Caco-2 (cell line): ENCODE measurements at regions of chr4 and their contacts with region 1.

Region 1: DNA sequence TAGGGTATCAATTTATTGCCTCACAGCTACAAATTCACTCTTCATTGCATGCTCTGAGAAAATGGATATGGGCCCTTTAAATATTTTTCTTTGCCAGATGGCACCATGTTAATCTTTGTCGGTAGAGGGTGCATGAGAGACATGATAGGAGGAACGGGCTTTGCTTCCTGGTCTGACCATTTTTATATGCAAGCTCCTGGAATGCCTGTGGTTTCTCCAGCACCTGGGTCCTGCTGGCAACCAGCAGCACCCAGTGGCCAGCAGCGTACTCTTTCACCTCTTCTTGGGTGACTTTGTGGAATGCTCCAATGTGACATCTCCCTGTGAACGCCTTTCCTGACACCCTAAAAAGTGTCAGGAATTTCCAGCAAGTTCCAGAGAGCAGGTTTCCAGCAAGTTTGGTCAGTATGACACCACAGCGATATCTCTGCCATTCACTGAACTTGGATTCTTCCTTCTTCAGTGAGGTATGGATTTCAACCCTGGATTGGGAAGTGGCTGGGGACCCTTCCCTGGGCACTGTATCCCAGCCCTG is 140.3 kb upstream of the PGRMC2 start:
- DNase-seq: peak; percentile 72 to 82
- H3K4me3 ChIP-seq: no peak overlapping the region
- H3K4me3 Mint-ChIP-seq: no peak overlapping the region
- H3K27ac Mint-ChIP-seq: peak overlapping the region; percentile 67
- H3K4me1 ChIP-seq: peaks cover 20% of the 10 kb centered on the region
- H3K4me1 Mint-ChIP-seq: peaks cover 8% of the 10 kb centered on the region
- H3K27me3 ChIP-seq: no peaks in the 10 kb centered on the region
- H3K27me3 Mint-ChIP-seq: no peaks in the 10 kb centered on the region
- CTCF ChIP-seq: peak; percentile 25 to 39

Region 2: GRCh38 chr4:128220286-128221235 is 207.3 kb before region 1 on chr4:
- CTCF ChIA-PET with region 1: no interaction called
- POLR2A ChIA-PET with region 1: no interaction called
- intact Hi-C with region 1: loop called (anchors 10 kb)
- DNase-seq: no peak
- H3K4me3 ChIP-seq: no peak overlapping the region
- H3K4me3 Mint-ChIP-seq: no peak overlapping the region
- H3K27ac Mint-ChIP-seq: no peak overlapping the region
- H3K4me1 ChIP-seq: no peaks in the 10 kb centered on the region
- H3K4me1 Mint-ChIP-seq: no peaks in the 10 kb centered on the region
- H3K27me3 ChIP-seq: no peaks in the 10 kb centered on the region
- H3K27me3 Mint-ChIP-seq: no peaks in the 10 kb centered on the region
- CTCF ChIP-seq: no peak

Region 3: GRCh38 chr4:128385683-128386304 is 42.1 kb before region 1 on chr4:
- CTCF ChIA-PET with region 1: no interaction called
- POLR2A ChIA-PET with region 1: no interaction called
- intact Hi-C with region 1: loop called (anchors 2 kb)
- DNase-seq: no peak
- H3K4me3 ChIP-seq: no peak overlapping the region
- H3K4me3 Mint-ChIP-seq: no peak overlapping the region
- H3K27ac Mint-ChIP-seq: no peak overlapping the region
- H3K4me1 ChIP-seq: peaks cover 32% of the 10 kb centered on the region
- H3K4me1 Mint-ChIP-seq: peaks cover 8% of the 10 kb centered on the region
- H3K27me3 ChIP-seq: no peaks in the 10 kb centered on the region
- H3K27me3 Mint-ChIP-seq: no peaks in the 10 kb centered on the region
- CTCF ChIP-seq: no peak

Region 4: DNA sequence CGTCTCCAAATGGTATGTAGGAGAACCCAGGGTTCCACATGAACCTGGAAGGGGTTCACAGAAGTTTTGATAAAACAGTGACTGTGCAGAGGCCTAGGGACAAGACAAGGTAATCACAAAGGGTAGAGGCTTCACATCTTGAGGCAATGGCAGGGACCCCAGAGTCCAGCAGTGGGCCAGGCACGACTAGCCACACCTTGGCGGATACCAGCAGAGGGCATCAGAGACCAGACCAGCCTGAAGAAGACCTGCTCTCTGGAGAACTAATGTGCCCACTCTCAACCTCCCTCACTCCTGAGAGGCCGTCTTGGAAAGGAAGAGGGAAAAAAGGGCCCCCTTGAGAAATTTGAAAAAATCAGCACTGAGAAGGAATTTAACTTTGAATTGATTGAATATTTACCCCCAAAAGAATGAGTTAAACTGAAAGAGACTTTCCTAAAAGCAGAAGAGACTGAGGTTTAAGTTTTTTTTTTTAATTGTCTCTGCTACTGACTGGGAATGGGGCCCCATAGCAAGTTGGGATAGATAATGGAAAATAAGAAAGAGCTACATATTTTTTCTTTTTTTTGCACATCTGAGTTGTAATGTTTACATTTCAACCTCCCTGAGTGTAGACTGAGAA is 137.8 kb after region 1 on chr4:
- CTCF ChIA-PET with region 1: no interaction called
- POLR2A ChIA-PET with region 1: no interaction called
- intact Hi-C with region 1: loop called (anchors 1 kb)
- DNase-seq: peak; percentile 62 to 70
- H3K4me3 ChIP-seq: no peak overlapping the region
- H3K4me3 Mint-ChIP-seq: no peak overlapping the region
- H3K27ac Mint-ChIP-seq: no peak overlapping the region
- H3K4me1 ChIP-seq: peaks cover 28% of the 10 kb centered on the region
- H3K4me1 Mint-ChIP-seq: peaks cover 43% of the 10 kb centered on the region
- H3K27me3 ChIP-seq: no peaks in the 10 kb centered on the region
- H3K27me3 Mint-ChIP-seq: no peaks in the 10 kb centered on the region
- CTCF ChIP-seq: peak; percentile 40 to 69

Region 5: DNA sequence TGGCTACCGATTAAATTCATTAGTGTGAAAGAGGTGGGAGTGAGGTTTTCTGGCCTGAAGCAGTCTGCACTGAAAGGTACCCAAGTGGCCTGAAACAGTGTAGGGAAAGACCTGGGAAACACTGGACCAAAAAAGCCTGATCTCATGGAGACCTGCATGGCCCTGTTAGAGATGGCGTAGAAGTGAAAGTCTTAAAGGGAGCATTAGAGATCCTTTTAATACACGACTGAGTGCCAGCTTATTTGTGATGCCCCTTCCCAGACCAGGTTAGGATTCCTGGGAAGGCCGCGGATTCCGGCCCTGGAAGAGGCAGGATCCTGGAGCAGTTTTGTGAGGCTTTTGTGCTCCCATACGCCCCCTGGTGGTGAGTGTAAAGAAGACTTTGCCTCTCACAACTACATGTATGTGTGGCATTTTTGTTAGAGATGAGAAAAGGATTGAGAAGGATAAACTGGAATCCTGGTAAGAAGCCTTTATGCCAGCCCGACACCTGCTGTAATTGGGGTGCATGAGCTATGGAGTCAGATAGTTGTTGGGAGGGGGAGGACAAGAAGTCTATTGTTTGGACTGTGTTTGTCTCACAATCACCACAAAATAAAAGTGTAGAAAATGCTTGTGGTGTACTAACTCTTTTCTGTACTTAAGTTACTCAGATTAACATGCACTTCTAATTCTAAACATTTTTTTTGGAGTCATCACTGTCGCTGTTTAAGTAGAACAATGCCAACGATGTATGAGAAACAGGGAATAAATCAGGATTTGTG is 435.6 kb after region 1 on chr4:
- CTCF ChIA-PET with region 1: no interaction called
- POLR2A ChIA-PET with region 1: no interaction called
- intact Hi-C with region 1: loop called (anchors 1 kb)
- DNase-seq: peak; percentile 73 to 77
- H3K4me3 ChIP-seq: no peak overlapping the region
- H3K4me3 Mint-ChIP-seq: no peak overlapping the region
- H3K27ac Mint-ChIP-seq: peak overlapping the region; percentile 40
- H3K4me1 ChIP-seq: no peaks in the 10 kb centered on the region; the same call in 1 of the 2 replicates
- H3K4me1 Mint-ChIP-seq: peaks cover 23% of the 10 kb centered on the region
- H3K27me3 ChIP-seq: no peaks in the 10 kb centered on the region
- H3K27me3 Mint-ChIP-seq: no peaks in the 10 kb centered on the region
- CTCF ChIP-seq: peak; percentile 77 to 84